ENCODE measurements at regions of chr1 and their contacts with region 1.

Region 1: GRCh38 chr1:232635778-232636356 is 5.9 kb upstream of the SIPA1L2 start:
- DNase-seq: no peak
- ATAC-seq: peak; percentile 48 to 83 (median 74)
- H3K4me3 ChIP-seq: no peak overlapping the region
- H3K27ac ChIP-seq: no peak overlapping the region
- H3K4me1 ChIP-seq: no peaks in the 10 kb centered on the region
- H3K27me3 ChIP-seq: no peaks in the 10 kb centered on the region
- CTCF ChIP-seq: peak; percentile 84

Region 2: DNA sequence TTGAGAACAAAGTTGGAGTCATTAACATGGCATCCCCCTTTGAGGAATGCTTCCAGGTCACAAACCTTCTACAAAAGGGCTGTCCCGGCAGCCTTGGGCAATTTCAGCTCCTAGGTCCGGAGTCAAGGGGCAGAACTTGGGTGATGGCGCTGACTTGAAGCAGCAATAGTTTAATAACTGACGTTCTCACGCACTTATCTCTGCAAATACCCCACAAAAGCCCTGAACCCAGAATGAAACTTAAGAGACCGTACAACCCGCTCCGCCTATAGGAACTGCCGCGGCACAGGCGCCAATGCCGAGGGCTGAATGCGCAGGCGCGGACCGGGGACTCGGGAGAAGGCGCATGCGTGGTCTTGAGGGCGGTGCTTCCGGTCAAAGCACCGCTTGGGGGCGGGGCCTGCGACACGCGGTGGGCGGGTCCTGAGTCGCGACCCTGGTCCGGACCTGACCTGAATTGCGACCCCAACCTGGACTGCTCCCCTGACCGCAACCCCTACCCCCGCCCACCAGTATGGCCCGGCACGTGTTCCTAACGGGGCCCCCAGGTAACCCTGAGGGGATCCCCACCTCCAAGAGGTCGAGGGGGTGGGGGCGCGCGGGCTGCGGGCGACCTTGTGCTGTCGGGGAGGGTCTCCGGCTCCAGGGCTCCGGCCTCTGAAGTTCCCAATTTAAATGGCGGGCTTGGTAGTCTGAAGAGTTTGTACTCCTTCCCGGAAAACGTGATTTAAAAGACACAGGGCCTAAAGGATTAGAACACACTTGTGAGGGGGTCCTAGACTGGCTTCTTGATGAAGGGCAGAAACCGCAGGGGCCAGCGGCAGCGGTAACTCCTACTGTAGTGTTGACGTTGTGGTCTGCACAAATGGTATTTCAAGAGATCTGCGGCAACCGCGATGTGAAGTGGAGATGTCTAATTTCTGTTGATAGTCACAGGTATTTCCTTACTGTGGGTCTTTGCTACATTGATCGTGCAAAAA is 314.6 kb after region 1 on chr1 and contains the start of gene NTPCR:
- intact Hi-C with region 1: loop called (anchors 5 to 10 kb)
- DNase-seq: peak; percentile 94 to 97
- ATAC-seq: peak; percentile 95 to 98 (median 95)
- H3K4me3 ChIP-seq: peak within 1 kb of the TSS; percentile 94
- H3K27ac ChIP-seq: peak within 1 kb of the TSS; percentile 93
- H3K4me1 ChIP-seq: peaks cover 19% of the 10 kb centered on the region
- H3K27me3 ChIP-seq: no peaks in the 10 kb centered on the region
- CTCF ChIP-seq: no peak
- total RNA-seq, gene NTPCR: 37.2 to 72.0 (median 62.2) TPM

Region 3: DNA sequence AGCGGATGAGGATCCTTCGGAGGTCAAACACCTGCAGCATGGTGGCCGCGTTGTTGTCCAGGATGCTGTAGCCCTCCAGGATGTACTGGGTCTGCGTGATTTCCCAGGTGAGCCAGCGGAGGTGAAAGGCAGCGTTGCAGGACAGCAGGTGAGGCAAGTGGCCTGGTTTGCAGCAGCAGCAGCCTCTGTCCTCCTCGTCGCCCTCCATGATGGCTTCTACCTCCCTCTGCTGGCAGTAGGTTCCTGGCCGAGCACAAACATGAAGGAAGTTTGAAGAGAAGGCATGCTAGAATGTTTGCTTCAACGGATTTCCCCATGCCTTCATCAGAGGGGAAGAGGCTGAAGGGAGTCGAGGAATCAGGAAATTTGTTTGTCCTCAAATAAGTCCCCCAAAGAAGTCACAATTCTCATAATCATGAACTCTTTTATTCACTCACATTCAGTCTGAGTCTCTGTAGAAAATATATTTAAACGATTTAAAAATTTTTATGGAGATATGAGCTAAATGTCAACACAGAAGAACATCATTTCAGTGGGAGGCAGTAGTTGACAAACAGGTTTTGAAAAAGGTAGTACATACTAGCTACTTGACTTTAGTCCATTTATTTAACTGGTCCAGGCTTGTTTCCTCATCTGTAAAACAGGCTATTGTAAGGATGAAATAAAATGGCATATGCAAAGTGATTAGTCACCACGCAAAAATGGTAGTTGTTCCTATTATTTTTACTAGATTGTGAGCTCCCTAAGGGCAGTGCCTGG is 389.5 kb after region 1 on chr1:
- intact Hi-C with region 1: loop called (anchors 2 to 5 kb)
- DNase-seq: peak; percentile 16 to 59
- ATAC-seq: peak; percentile 65 to 81 (median 72)
- H3K4me3 ChIP-seq: no peak overlapping the region
- H3K27ac ChIP-seq: no peak overlapping the region
- H3K4me1 ChIP-seq: no peaks in the 10 kb centered on the region
- H3K27me3 ChIP-seq: no peaks in the 10 kb centered on the region
- CTCF ChIP-seq: peak; percentile 62

Region 4: GRCh38 chr1:233240829-233241682 is 605.2 kb after region 1 on chr1:
- intact Hi-C with region 1: loop called (anchors 2 to 5 kb)
- DNase-seq: peak; percentile 60 to 78
- ATAC-seq: peak; percentile 80 to 91 (median 82)
- H3K4me3 ChIP-seq: peak overlapping the region; percentile 40
- H3K27ac ChIP-seq: no peak overlapping the region
- H3K4me1 ChIP-seq: no peaks in the 10 kb centered on the region
- H3K27me3 ChIP-seq: no peaks in the 10 kb centered on the region
- CTCF ChIP-seq: peak; percentile 85

Measured in psoas muscle (tissue), 8 donors.